Posterior vena cava (tissue), 2 donors: ENCODE measurements at regions of chr6 and their contacts with region 1.

Region 1: GRCh38 chr6:89242574-89243330 is 25.6 kb upstream of the GABRR1 start:
- DNase-seq: no peak

Region 2: GRCh38 chr6:89122625-89123024 is 120.1 kb before region 1 on chr6:
- intact Hi-C with region 1: loop called (anchors 5 kb)
- DNase-seq: no peak

Region 3: GRCh38 chr6:89360415-89360999 is 117.8 kb after region 1 on chr6:
- intact Hi-C with region 1: no loop called
- DNase-seq: no peak